Breast epithelium (tissue), 4 donors: ENCODE measurements at regions of chr6 and their contacts with region 1.

Region 1: GRCh38 chr6:82430611-82431010 is 67.0 kb downstream of the TPBG start:
- DNase-seq: no peak
- H3K4me3 ChIP-seq: no peak overlapping the region
- H3K27ac ChIP-seq: no peak overlapping the region
- H3K4me1 ChIP-seq: no peaks in the 10 kb centered on the region
- H3K27me3 ChIP-seq: no peaks in the 10 kb centered on the region
- CTCF ChIP-seq: no peak
- POLR2A ChIP-seq: no peak

Region 2: GRCh38 chr6:82348130-82348529 is 82.5 kb before region 1 on chr6:
- intact Hi-C with region 1: loop called (anchors 5 kb)
- DNase-seq: no peak
- H3K4me3 ChIP-seq: no peak overlapping the region
- H3K27ac ChIP-seq: no peak overlapping the region
- H3K4me1 ChIP-seq: no peaks in the 10 kb centered on the region
- H3K27me3 ChIP-seq: no peaks in the 10 kb centered on the region
- CTCF ChIP-seq: no peak
- POLR2A ChIP-seq: no peak